ENCODE measurements at regions of chr6 and their contacts with region 1.

Region 1: DNA sequence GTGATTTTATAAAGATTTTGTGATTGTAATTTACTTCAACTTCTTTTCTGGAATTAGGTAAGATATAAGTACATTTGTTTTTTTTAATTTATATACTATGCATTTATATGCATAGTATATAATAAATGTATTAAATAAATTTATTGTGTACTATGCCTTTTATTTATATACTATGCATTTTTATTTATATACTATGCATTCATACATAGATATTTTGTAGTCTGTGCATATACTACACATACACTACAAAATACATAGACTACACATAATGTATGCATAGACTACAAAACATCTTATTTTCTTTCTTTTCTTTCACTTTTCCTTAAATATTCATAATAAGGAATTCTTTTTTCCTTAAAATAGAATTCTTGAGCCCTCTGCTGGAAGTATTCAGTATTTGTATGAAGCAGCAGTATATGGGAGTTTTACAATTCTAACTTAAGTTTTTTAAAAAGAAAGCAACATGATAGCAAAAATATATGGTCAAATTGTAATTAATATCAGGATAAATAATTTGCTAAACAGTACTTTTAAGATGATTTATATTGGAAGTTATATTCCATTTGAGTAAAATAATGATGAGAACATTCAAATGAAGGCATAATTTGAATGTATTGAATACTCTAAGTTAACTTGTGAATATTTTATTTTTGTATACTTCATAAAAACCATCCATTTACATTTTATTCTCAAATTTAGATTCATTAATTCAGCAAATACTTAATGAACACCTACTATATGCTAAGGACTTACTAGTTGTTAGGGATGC is 129.3 kb downstream of the KLHL32 start:
- DNase-seq: no peak
- H3K4me3 ChIP-seq: no peak overlapping the region
- H3K27ac ChIP-seq: no peak overlapping the region
- H3K4me1 ChIP-seq: peaks cover 0 to 8% (median 0%) of the 10 kb centered on the region in 4 donors
- H3K27me3 ChIP-seq: no peaks in the 10 kb centered on the region
- CTCF ChIP-seq: peak; percentile 44 to 46

Region 2: DNA sequence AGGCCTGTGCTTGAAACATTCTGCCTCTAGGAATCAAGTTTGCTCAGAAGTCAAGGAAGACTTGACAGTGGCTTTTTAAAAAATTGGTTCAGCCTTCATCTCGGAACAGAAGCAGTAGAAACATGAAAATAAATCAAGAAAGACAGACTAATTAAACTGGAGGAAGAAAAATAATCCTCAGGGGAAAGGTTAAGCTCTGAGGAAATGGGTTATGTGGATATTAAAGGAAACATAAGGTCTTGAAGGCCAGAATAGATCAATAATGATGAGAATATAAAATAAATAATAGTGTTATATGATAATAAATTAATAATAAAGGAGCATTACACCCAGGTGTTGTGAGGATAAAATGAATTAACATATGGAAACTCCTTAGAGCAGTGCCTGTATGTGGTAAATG is 338.2 kb before region 1 on chr6:
- intact Hi-C with region 1: no loop called
- DNase-seq: no peak
- H3K4me3 ChIP-seq: no peak overlapping the region
- H3K27ac ChIP-seq: no peak overlapping the region
- H3K4me1 ChIP-seq: no peaks in the 10 kb centered on the region
- H3K27me3 ChIP-seq: no peaks in the 10 kb centered on the region
- CTCF ChIP-seq: no peak

Region 3: DNA sequence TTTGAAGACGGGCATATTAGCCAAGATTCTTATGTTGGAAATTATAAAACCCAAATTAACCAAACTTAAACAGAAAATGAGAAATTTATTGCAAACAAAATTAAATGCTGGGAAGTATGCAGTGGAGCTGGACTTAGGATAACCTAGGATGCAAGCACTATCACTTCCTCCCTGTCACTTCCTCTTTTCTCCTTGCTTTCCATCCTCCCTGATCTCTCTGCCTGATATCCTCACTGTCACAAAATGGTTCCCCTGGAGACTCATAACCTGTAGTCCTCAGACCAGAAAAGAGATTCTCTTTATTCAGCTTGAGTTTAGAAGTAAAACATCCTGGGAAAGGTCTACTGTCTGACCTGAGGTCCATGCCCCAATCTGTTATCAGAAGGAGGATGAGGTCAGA is 136.7 kb before region 1 on chr6:
- intact Hi-C with region 1: loop called (anchors 5 kb)
- DNase-seq: no peak
- H3K4me3 ChIP-seq: no peak overlapping the region
- H3K27ac ChIP-seq: no peak overlapping the region
- H3K4me1 ChIP-seq: no peaks in the 10 kb centered on the region
- H3K27me3 ChIP-seq: no peaks in the 10 kb centered on the region
- CTCF ChIP-seq: no peak

Region 4: GRCh38 chr6:97110626-97111025 is 56.8 kb after region 1 on chr6:
- intact Hi-C with region 1: no loop called
- DNase-seq: no peak
- H3K4me3 ChIP-seq: no peak overlapping the region
- H3K27ac ChIP-seq: no peak overlapping the region
- H3K4me1 ChIP-seq: no peaks in the 10 kb centered on the region
- H3K27me3 ChIP-seq: no peaks in the 10 kb centered on the region
- CTCF ChIP-seq: no peak

Region 5: GRCh38 chr6:98116455-98116854 is 1062.6 kb after region 1 on chr6:
- intact Hi-C with region 1: no loop called
- DNase-seq: no peak
- H3K4me3 ChIP-seq: no peak overlapping the region
- H3K27ac ChIP-seq: no peak overlapping the region
- H3K4me1 ChIP-seq: no peaks in the 10 kb centered on the region
- H3K27me3 ChIP-seq: no peaks in the 10 kb centered on the region
- CTCF ChIP-seq: no peak